ENCODE measurements at regions of chr3 and their contacts with region 1.

Region 1: DNA sequence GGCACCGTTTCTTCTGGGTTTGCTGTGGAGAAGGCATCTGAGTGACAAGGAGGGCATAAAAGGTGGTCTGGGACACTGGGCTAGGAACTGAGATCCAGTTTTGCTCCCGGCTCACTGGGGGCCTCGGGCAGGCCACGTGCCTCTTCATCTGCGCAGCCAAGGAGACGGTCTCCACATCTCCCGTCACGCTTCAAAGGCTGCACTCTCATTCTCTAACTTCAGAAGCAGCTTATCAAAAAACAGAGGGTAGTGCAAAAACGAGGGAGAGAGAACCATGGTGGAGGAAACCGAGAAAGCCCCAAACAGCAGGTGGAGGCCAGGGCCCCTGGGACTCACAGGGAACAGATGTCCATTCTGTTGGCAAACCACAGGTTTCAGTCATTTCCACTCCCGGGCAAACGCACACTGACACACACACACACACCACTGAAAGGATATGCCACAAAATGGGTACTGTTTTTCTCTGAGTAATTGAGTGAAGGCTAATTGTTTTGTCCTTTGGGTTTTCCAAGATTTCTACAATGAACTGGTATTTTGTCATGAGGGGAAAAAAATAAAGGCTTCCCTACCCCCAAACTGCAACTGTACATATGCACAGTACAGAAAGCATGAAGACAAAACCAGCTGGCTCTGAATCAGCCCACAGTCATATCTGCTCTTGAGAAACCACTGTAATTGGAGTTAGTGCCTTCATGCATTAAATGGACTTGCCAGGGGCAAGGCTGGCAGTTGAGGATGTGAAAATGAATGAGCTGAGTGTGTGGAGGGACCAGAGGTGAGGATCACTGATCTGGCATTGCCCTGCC is 71.9 kb downstream of the MGLL start:
- DNase-seq: peak; percentile 36
- ATAC-seq: peak; percentile 50
- H3K4me3 Mint-ChIP-seq: peak overlapping the region; percentile 69
- H3K27ac Mint-ChIP-seq: peak overlapping the region; percentile 88
- H3K4me1 Mint-ChIP-seq: peaks cover 57% of the 10 kb centered on the region
- H3K27me3 Mint-ChIP-seq: no peaks in the 10 kb centered on the region
- CTCF ChIP-seq: no peak

Region 2: DNA sequence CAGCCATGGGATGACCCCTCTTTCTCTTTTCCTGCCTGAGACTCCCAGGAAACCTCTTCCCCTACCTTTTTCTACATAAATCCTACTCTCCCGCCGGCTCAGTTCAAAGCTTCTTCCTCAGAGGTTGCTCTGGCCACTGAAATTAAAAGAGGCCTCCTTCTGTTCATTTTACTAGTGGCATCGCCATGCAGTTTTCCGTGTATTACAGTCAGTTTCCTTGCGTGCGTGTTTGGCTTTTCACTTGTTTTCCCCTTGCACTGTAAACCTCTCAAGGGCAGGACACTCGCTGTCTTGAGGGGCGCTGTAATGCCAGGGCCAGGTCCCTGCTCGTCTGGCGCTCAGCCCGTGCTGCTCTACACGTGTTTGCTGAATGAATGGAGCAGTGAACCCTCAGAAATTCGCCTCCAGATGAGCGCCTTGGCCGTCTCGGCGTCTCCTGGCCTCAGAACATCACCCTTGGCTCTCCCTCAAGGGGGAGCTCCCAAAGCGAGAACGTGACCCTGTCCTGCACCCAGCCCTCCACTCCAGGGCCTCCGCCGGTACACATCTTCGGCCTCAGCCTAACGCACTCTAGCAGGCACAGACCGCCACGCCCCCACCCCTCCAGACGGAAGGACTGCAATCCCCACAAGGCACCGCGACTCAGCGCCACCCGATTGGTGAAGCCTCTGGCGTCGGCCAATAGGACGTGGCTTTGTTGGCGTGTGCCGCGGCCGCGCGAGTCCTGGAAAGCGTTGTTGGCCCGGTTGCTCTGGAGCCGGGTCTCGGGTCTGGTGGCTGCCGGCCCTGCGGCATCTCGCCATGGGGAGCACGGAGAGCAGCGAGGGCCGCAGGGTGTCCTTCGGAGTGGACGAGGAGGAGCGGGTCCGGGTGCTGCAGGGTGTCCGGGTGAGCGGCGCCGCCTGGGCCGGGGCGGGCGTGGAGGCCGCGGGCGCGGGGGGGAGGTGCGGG is 1046.6 kb before region 1 on chr3 and contains the start of gene CHCHD6:
- CTCF ChIA-PET with region 1: no interaction called
- POLR2A ChIA-PET with region 1: no interaction called
- intact Hi-C with region 1: loop called (anchors 10 kb)
- DNase-seq: peak; percentile 94
- ATAC-seq: peak; percentile 96
- H3K4me3 Mint-ChIP-seq: peak within 1 kb of the TSS; percentile 99
- H3K27ac Mint-ChIP-seq: peak within 1 kb of the TSS; percentile 74
- H3K4me1 Mint-ChIP-seq: peaks cover 17% of the 10 kb centered on the region
- H3K27me3 Mint-ChIP-seq: peaks cover 32% of the 10 kb centered on the region
- CTCF ChIP-seq: no peak
- total RNA-seq, gene CHCHD6: 7.5 and 10.0 TPM in 2 replicates

Region 3: DNA sequence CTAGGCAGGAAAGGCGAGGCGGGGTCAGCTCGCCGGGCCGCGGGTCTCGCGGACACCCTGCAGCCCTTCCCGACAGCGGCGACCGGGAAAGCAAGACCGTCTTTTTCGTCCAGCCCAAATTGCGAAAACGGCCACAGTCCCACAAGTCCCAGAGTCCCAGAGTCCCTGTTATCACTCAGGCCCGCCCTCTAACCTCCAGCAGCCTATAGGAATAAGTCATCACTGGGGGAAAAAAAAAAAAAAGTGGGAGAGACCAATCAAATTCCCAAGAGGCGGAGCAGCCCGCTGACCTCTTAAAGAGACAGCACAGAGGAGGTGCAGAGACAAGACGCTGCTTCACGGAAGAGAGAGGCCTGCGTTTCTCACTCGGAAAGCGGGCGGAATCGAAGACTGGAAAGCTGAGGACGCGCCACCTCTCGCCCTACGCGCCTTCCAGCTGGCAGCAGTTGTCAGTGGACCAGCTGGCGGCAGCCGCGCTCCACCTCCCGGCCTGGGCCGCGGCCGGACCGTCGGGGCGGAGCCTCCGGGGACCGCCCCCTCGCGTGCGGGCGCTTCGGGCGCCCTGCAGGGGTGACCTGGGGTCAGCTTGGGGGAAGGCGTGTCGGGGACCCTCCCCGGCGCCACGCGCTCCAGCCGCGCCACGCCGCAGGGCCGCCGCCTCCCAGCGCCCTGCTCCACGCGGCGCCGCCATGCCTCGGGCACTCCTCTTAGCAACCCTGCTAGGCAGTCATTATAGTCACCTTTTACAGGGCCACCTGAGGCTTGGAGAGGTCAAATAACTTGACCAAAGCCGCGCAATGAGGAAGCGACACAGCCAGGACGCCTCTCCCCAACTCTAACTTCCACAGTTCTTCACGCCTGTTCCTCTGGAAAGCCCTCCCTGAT is 159.6 kb before region 1 on chr3 and contains the start of gene TPRA1:
- CTCF ChIA-PET with region 1: no interaction called
- POLR2A ChIA-PET with region 1: no interaction called
- intact Hi-C with region 1: loop called (anchors 2 kb)
- DNase-seq: peak; percentile 79
- ATAC-seq: peak; percentile 82
- H3K4me3 Mint-ChIP-seq: peak within 1 kb of the TSS; percentile 90
- H3K27ac Mint-ChIP-seq: peak within 1 kb of the TSS; percentile 85
- H3K4me1 Mint-ChIP-seq: peaks cover 28% of the 10 kb centered on the region
- H3K27me3 Mint-ChIP-seq: no peaks in the 10 kb centered on the region
- CTCF ChIP-seq: no peak
- total RNA-seq, gene TPRA1: 17.5 and 18.3 TPM in 2 replicates

Region 4: DNA sequence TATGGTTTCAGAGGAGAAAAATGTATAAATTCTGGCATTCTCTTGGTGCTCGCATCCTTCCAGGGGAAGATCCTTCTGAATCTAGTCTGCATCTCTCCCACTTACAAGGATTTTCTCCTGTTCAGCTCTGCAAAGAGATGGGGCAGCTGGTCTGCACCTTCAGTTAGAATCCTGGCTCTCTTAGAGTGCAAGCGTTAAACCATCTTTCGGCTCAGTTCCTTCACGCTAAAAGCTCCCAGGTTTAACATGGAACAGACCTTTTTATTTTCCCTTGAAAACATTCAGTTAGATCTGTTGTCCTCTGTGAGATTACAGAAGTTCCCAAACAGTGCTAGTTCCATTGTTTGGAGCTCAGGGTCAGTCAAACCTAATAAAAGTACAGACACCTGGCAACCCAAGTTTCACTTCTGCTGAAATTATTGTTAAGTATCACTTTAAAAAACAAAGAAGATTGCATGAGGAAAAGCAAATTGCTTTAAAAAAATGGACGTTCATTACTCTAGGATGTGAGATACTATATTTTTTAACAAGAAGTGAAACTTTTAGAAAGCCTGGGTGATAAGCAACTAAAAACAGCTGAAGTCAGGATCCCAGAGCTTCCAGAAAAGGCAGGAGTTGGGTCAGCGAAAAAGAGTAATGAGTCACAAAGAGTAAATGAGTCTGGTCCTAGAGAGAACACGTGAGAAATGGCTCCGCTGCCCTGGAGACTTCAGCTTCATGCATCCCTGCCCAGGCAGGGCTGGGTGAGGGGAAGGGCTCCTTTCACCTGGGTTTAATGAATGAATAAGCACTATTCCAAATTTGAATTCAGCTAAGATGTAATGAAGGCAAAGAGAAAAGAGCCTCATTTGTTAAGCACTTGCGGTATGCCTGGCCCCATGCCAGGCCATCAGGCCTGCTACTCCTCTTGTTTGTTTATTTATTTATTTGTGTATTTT is 14.4 kb before region 1 on chr3:
- CTCF ChIA-PET with region 1: interaction called, 9 read pairs
- POLR2A ChIA-PET with region 1: interaction called, 24 read pairs
- intact Hi-C with region 1: loop called (anchors 1 kb)
- DNase-seq: no peak
- ATAC-seq: peak; percentile 91
- H3K4me3 Mint-ChIP-seq: peak overlapping the region; percentile 77
- H3K27ac Mint-ChIP-seq: peak overlapping the region; percentile 93
- H3K4me1 Mint-ChIP-seq: peaks cover 46% of the 10 kb centered on the region
- H3K27me3 Mint-ChIP-seq: no peaks in the 10 kb centered on the region
- CTCF ChIP-seq: no peak

Region 5: GRCh38 chr3:127791211-127791946 is 41.0 kb after region 1 on chr3:
- CTCF ChIA-PET with region 1: interaction called, 6 read pairs
- POLR2A ChIA-PET with region 1: interaction called, 4 read pairs
- intact Hi-C with region 1: loop called (anchors 1 kb)
- DNase-seq: no peak
- ATAC-seq: peak; percentile 83
- H3K4me3 Mint-ChIP-seq: no peak overlapping the region
- H3K27ac Mint-ChIP-seq: no peak overlapping the region
- H3K4me1 Mint-ChIP-seq: peaks cover 9% of the 10 kb centered on the region
- H3K27me3 Mint-ChIP-seq: no peaks in the 10 kb centered on the region
- CTCF ChIP-seq: no peak

Region 6: DNA sequence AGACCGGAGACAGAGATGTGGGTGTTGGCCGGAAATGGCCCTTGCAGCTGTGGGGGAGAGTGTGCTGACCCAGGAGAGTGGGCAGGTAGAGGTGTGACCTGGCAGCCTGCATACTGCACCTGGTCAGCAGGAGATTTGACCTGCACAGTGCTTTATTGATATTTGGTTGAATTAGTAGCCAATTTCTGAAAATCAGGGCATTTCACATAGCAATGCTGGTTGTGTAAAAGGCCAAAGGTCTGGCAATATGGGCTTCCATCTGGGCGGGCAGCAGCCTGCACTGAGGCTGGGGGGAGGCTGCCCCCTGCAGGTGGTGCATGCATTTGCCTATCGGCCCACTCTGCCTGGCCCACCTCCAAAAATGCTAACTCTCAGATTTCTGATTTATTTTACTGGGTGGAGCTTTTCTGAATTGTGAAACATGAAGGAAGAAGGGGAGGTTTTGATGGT is 81.3 kb after region 1 on chr3:
- CTCF ChIA-PET with region 1: interaction called, 4 read pairs
- POLR2A ChIA-PET with region 1: interaction called, 5 read pairs
- intact Hi-C with region 1: loop called (anchors 1 kb)
- DNase-seq: peak; percentile 32
- ATAC-seq: no peak
- H3K4me3 Mint-ChIP-seq: no peak overlapping the region
- H3K27ac Mint-ChIP-seq: no peak overlapping the region
- H3K4me1 Mint-ChIP-seq: peaks cover 40% of the 10 kb centered on the region
- H3K27me3 Mint-ChIP-seq: no peaks in the 10 kb centered on the region
- CTCF ChIP-seq: no peak

Region 7: GRCh38 chr3:129278439-129278970 is 1528.1 kb after region 1 on chr3 and contains the start of gene HMCES:
- CTCF ChIA-PET with region 1: no interaction called
- POLR2A ChIA-PET with region 1: no interaction called
- intact Hi-C with region 1: loop called (anchors 10 kb)
- DNase-seq: peak; percentile 91
- ATAC-seq: peak; percentile 62
- H3K4me3 Mint-ChIP-seq: peak within 1 kb of the TSS; percentile 91
- H3K27ac Mint-ChIP-seq: peak within 1 kb of the TSS; percentile 86
- H3K4me1 Mint-ChIP-seq: peaks cover 80% of the 10 kb centered on the region
- H3K27me3 Mint-ChIP-seq: no peaks in the 10 kb centered on the region
- CTCF ChIP-seq: no peak
- total RNA-seq, gene HMCES: 31.7 and 37.2 TPM in 2 replicates

Measured in activated B cell treated with CpG ODN at 0.5 μM for 24 hours (primary cell).